Right ventricle myocardium inferior (tissue), 1 donor: ENCODE measurements at regions of chr6 and their contacts with region 1.

Region 1: GRCh38 chr6:41846666-41847237 is 48.4 kb downstream of the USP49 start:
- DNase-seq: no peak
- ATAC-seq: peak; percentile 85

Region 2: GRCh38 chr6:41723530-41724227 is 123.1 kb before region 1 on chr6:
- intact Hi-C with region 1: no loop called
- DNase-seq: peak; percentile 94
- ATAC-seq: peak; percentile 80

Region 3: GRCh38 chr6:41756354-41756753 is 90.4 kb before region 1 on chr6:
- intact Hi-C with region 1: no loop called
- DNase-seq: no peak
- ATAC-seq: no peak

Region 4: DNA sequence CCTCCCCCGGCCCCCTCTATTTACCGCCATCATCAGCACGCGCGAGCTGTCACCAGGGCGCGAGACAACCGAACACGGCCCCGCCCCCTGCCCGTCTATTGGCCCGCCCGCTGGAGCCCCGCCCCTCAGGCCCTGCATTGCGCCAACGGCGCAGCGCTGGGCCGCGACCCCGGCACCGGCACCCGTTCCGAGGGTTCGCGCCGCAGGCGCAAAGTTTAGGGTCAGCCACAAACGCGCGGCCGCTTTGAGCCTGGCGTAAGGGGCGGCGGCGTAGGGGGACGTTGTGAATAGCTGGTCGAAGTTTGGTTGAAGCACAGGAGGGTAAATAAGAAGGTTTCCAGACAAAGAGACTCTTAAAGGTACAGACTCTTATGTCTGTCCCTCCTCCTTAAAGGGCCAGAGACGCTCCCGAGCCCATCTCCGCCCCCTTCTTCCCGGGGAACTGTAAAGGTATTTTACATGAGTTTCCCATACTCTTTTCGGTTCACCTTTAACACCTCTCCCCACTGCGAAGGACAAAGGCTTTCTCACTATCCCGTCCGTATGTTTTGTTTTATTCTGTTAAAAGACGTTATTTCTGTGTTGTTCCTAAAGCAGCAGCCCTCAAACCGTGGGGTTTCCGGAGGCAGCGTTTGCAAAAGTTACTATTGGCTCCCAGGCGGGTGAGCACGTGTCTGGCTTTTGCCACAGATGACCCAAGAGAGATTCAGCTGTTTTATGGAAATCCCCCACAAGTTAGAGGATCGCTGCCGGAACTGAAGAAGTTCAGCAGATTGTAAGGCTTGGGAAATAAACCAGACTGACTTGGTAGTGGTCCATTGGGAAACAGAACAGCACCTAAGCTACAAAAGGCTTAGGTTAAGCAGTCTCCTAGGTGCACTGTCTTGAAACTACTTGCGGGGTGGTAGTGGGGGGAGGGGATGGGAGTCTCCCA is 48.8 kb after region 1 on chr6 and contains the start of gene USP49:
- intact Hi-C with region 1: loop called (anchors 5 kb)
- DNase-seq: peak; percentile 96
- ATAC-seq: peak; percentile 99
- total RNA-seq, gene USP49: 2.0 TPM

Region 5: GRCh38 chr6:41920921-41921711 is 74.4 kb after region 1 on chr6 and contains the starts of genes BYSL and MED20:
- intact Hi-C with region 1: loop called (anchors 2 kb)
- DNase-seq: peak; percentile 96
- ATAC-seq: peak; percentile 96
- total RNA-seq, gene BYSL: 9.6 TPM
- total RNA-seq, gene MED20: 22.9 TPM

Region 6: DNA sequence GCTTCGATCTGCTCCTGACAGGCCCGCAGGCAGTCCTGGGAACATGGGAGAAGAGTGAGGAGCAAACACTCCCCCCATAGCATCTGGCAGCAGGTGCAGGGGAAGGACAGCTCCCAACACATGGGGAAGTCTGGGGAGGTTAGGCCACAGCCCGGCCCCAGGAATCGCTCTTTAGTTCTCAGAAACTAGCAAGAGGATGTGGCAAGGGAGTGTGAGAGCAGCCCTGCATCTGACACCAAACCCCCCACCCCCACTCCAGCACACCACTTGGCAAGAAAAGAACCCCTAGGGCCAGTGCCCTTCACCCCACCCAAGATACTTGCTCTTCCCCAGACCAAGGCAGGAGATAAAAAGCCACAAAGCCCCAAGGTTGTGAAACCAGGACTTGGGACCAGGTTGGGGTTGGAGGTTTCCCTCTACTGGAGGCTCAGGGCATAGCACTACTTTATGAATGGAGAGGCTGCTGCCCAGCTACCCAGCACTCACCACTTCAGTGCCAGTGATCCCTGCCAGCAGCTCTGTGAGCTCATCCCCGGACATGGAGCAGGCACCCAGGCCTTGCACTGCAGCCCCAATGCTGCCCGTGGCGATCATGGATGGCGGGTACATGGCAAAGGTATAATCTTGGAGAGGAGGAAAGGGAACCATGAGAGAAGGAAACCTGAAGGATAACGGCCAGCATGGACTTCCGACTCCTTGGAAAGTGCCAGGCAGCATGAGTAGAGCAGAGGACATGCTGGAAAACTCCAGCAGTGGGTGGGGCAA is 89.5 kb after region 1 on chr6:
- intact Hi-C with region 1: loop called (anchors 5 kb)
- DNase-seq: peak; percentile 85
- ATAC-seq: peak; percentile 74